CD8-positive, alpha-beta T cell (primary cell): ENCODE measurements at regions of chr3 and their contacts with region 1.

Region 1: DNA sequence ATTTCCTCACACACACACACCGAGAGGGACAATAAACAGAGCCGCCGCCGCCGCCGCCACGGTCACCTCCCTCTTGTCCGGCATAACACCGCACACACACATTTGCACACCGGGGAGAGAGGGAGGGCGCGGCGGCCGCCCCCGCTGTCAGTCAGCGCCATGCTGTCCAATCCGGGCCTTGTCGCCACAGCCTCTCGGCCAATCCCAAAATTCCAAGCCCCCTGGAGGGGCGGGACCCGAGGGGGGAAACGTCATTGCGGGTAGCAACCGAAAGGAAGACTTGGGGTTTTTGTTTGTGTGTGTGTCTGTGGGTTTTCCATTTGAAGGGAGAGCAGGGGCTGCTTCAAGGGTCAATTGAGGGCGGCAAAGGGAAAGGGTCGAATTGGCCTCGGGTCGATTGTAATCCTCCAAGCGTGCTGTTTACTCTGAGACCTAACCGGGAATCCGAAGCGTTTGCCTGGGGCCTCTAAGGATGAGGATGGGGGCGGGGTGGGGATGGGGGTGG is at the start of gene TOP2B:
- DNase-seq: peak; percentile 91 to 97 (median 95)
- ATAC-seq: peak; percentile 88
- H3K4me3 ChIP-seq: peak within 1 kb of the TSS; percentile 69 to 84
- H3K4me3 Mint-ChIP-seq: peak within 1 kb of the TSS; percentile 98
- H3K27ac ChIP-seq: peak within 1 kb of the TSS; percentile 86 to 94
- H3K27ac Mint-ChIP-seq: peak within 1 kb of the TSS; percentile 100
- H3K4me1 ChIP-seq: peaks cover 36% of the 10 kb centered on the region
- H3K4me1 Mint-ChIP-seq: peaks cover 49% of the 10 kb centered on the region
- H3K27me3 ChIP-seq: no peaks in the 10 kb centered on the region
- H3K27me3 Mint-ChIP-seq: no peaks in the 10 kb centered on the region
- CTCF ChIP-seq: no peak
- total RNA-seq, gene TOP2B: 71.8 to 74.7 TPM

Region 2: DNA sequence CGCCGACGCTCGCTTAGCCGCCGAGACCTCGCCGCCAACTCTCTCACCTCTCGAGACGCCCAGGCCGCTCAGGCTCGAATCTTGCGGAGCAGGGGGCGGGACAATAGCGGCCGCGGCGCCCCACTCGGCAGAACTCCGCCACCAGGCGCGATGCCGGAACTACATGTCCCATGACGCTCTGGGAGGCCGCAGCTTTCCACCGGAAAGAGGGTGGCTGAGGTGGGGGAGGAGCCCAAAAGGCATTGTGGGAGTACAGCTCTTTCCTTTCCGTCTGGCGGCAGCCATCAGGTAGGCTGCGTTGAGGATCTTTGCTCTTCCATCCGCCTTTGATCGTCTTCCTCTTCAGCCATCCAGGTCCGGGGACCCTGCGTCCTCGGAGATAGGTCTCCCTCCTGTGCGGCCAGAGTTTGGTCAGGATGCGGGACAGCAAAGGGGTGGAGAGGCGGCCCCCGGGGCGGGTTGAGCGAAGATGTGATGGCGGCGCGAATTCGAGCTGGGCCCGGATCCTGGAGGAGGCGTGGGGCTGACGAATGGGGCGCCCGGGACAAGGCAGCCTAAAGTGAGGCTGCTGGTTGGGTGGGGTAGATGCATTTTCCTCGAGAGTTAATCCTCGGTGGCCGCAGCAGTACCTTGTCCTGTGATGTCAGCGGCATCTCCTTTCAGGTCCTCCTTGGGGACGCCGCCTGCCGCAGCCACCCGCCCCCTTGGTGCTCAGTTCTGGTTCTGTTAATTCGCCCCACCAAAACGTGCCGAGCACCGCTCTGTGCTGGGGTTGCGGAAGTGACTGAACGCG is 1747.8 kb before region 1 on chr3 and contains the starts of genes NKIRAS1 and RPL15:
- CTCF ChIA-PET with region 1: no interaction called
- POLR2A ChIA-PET with region 1: no interaction called
- intact Hi-C with region 1: loop called in 1 of 2 experiments (anchors 10 kb)
- DNase-seq: peak; percentile 94 to 98 (median 97)
- ATAC-seq: peak; percentile 93
- H3K4me3 ChIP-seq: peak within 1 kb of the TSS; percentile 89 to 95
- H3K4me3 Mint-ChIP-seq: peak within 1 kb of the TSS; percentile 99
- H3K27ac ChIP-seq: peak within 1 kb of the TSS; percentile 88
- H3K27ac Mint-ChIP-seq: peak within 1 kb of the TSS; percentile 97
- H3K4me1 ChIP-seq: peaks cover 38% of the 10 kb centered on the region
- H3K4me1 Mint-ChIP-seq: peaks cover 55% of the 10 kb centered on the region
- H3K27me3 ChIP-seq: no peaks in the 10 kb centered on the region
- H3K27me3 Mint-ChIP-seq: no peaks in the 10 kb centered on the region
- CTCF ChIP-seq: peak; percentile 22
- total RNA-seq, gene NKIRAS1: 4.5 to 6.2 TPM
- total RNA-seq, gene RPL15: 2,460 to 2,470 TPM

Region 3: DNA sequence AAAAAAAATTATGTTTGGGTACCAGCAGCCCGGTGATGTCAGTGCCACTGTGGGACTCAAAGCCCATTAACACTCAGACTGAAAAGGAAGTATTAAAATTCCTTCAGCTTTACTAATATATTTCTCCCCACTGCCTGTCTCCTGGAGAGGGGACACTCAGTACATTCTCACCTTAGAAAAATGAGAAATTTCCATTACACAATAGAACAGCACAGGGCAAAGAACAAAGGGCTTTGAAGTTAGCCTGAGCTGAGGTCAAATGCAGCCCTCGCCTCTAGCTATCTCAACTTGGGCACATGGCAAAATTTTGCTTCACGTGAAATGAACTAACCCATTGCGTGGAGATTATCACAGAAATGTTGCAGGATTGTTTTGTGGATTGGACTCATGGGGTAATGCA is 156.0 kb before region 1 on chr3:
- CTCF ChIA-PET with region 1: no interaction called
- POLR2A ChIA-PET with region 1: no interaction called
- intact Hi-C with region 1: no loop called
- DNase-seq: no peak
- ATAC-seq: no peak
- H3K4me3 ChIP-seq: no peak overlapping the region
- H3K4me3 Mint-ChIP-seq: no peak overlapping the region
- H3K27ac ChIP-seq: no peak overlapping the region
- H3K27ac Mint-ChIP-seq: no peak overlapping the region
- H3K4me1 ChIP-seq: no peaks in the 10 kb centered on the region
- H3K4me1 Mint-ChIP-seq: no peaks in the 10 kb centered on the region
- H3K27me3 ChIP-seq: no peaks in the 10 kb centered on the region
- H3K27me3 Mint-ChIP-seq: peaks cover 14% of the 10 kb centered on the region
- CTCF ChIP-seq: no peak

Region 4: DNA sequence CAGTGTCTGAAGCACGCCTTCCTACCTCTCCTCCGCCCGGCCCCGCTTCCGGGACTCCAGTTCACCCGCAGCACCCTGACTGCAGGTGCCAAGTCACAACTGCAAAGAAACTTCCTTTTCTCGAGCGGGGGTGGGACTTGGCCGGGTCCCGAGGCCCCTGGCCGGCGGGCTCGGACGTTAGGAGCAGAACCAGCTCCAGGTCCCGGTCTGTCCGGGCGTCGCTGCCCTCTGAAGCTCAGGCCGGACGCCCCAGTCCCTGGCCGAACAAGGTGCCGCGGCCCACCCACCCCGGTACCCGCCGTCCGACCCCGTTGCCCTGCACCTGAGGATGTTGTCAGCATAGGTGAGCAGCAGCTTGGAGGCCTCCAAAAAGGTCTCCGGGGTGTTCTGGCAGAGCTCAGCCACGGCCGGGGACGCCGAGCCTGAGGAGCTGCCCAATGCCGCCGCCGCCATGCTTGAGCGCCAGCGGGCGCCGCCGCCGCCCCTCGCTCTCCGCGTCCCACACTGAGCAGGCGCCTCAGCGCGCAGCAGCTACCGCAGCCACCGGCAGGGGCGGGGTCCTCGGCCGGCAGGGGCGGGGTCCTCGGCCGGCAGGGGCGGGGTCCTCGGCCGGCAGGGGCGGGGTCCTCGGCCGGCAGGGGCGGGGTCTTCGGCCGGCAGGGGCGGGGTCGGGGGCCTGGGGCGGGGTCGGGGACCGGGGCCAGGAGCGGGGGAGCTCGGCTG is 118.2 kb after region 1 on chr3 and contains the start of gene NGLY1:
- CTCF ChIA-PET with region 1: no interaction called
- POLR2A ChIA-PET with region 1: interaction called, 13 read pairs
- intact Hi-C with region 1: loop called (anchors 1 kb)
- DNase-seq: peak; percentile 72 to 91 (median 84)
- ATAC-seq: peak; percentile 90
- H3K4me3 ChIP-seq: peak within 1 kb of the TSS; percentile 94 to 97
- H3K4me3 Mint-ChIP-seq: peak within 1 kb of the TSS; percentile 94
- H3K27ac ChIP-seq: peak within 1 kb of the TSS; percentile 84 to 85
- H3K27ac Mint-ChIP-seq: peak within 1 kb of the TSS; percentile 93
- H3K4me1 ChIP-seq: peaks cover 30% of the 10 kb centered on the region
- H3K4me1 Mint-ChIP-seq: peaks cover 52% of the 10 kb centered on the region
- H3K27me3 ChIP-seq: no peaks in the 10 kb centered on the region
- H3K27me3 Mint-ChIP-seq: no peaks in the 10 kb centered on the region
- CTCF ChIP-seq: no peak
- total RNA-seq, gene NGLY1: 51.4 to 57.0 TPM

Region 5: GRCh38 chr3:25789596-25790556 is 125.0 kb after region 1 on chr3 and contains the start of gene OXSM:
- CTCF ChIA-PET with region 1: interaction called, 4 read pairs
- POLR2A ChIA-PET with region 1: no interaction called
- intact Hi-C with region 1: loop called in 1 of 2 experiments (anchors 1 kb)
- DNase-seq: peak; percentile 75 to 98 (median 89)
- ATAC-seq: peak; percentile 93
- H3K4me3 ChIP-seq: peak within 1 kb of the TSS; percentile 64 to 65
- H3K4me3 Mint-ChIP-seq: peak within 1 kb of the TSS; percentile 97
- H3K27ac ChIP-seq: peak within 1 kb of the TSS; percentile 85 to 87
- H3K27ac Mint-ChIP-seq: peak within 1 kb of the TSS; percentile 98
- H3K4me1 ChIP-seq: peaks cover 18% of the 10 kb centered on the region
- H3K4me1 Mint-ChIP-seq: peaks cover 54% of the 10 kb centered on the region
- H3K27me3 ChIP-seq: no peaks in the 10 kb centered on the region
- H3K27me3 Mint-ChIP-seq: no peaks in the 10 kb centered on the region
- CTCF ChIP-seq: no peak
- total RNA-seq, gene OXSM: 4.0 to 5.9 TPM

Region 6: DNA sequence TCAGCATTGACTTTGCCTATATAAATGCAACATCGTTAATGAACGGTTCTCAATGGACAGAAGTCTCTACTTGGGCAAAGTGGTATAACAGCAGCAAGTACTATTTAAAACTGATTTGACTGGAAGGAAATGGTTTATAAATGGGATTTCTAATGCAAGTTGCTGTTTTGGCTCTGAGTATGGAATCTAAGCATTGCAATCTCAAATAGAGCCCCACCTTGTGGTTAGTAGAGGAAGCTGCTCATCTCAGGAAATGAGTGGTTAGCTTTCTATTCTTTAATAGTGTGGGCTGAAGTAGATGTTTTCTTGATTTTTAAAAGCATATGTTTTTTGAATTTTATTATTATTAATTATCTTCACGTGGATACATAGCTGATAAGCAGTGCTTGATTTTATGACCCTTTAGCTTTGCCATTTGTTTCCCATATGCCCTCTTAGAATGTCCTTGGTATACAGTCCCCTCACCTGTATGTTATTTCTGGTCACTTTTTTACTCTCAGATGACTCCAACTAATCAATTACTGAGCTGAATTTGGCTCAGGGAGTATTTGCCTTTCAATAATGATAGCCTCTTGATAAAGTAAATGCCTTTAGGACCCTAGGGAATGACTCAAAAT is 192.1 kb after region 1 on chr3:
- CTCF ChIA-PET with region 1: interaction called, 9 read pairs
- POLR2A ChIA-PET with region 1: no interaction called
- intact Hi-C with region 1: loop called in 1 of 2 experiments (anchors 5 kb)
- DNase-seq: peak in 3 of 9 experiments; percentile 10 to 66 (median 54)
- ATAC-seq: peak; percentile 84
- H3K4me3 ChIP-seq: no peak overlapping the region
- H3K4me3 Mint-ChIP-seq: no peak overlapping the region
- H3K27ac ChIP-seq: no peak overlapping the region
- H3K27ac Mint-ChIP-seq: no peak overlapping the region
- H3K4me1 ChIP-seq: no peaks in the 10 kb centered on the region
- H3K4me1 Mint-ChIP-seq: no peaks in the 10 kb centered on the region
- H3K27me3 ChIP-seq: no peaks in the 10 kb centered on the region
- H3K27me3 Mint-ChIP-seq: no peaks in the 10 kb centered on the region
- CTCF ChIP-seq: peak; percentile 67

Region 7: GRCh38 chr3:27368831-27369607 is 1704.2 kb after region 1 on chr3 and contains the start of gene NEK10:
- CTCF ChIA-PET with region 1: no interaction called
- POLR2A ChIA-PET with region 1: no interaction called
- intact Hi-C with region 1: loop called in 1 of 2 experiments (anchors 5 kb)
- DNase-seq: peak; percentile 86 to 94 (median 93)
- ATAC-seq: peak; percentile 96
- H3K4me3 ChIP-seq: peak within 1 kb of the TSS; percentile 85 to 89
- H3K4me3 Mint-ChIP-seq: peak within 1 kb of the TSS; percentile 97
- H3K27ac ChIP-seq: peak within 1 kb of the TSS; percentile 15 to 22
- H3K27ac Mint-ChIP-seq: peak within 1 kb of the TSS; percentile 81
- H3K4me1 ChIP-seq: peaks cover 8% of the 10 kb centered on the region
- H3K4me1 Mint-ChIP-seq: peaks cover 16% of the 10 kb centered on the region
- H3K27me3 ChIP-seq: no peaks in the 10 kb centered on the region
- H3K27me3 Mint-ChIP-seq: no peaks in the 10 kb centered on the region
- CTCF ChIP-seq: no peak
- total RNA-seq, gene NEK10: 0.22 to 0.94 TPM